Posterior cingulate gyrus (tissue), 11 donors: ENCODE measurements at regions of chr13 and their contacts with region 1.

Region 1: DNA sequence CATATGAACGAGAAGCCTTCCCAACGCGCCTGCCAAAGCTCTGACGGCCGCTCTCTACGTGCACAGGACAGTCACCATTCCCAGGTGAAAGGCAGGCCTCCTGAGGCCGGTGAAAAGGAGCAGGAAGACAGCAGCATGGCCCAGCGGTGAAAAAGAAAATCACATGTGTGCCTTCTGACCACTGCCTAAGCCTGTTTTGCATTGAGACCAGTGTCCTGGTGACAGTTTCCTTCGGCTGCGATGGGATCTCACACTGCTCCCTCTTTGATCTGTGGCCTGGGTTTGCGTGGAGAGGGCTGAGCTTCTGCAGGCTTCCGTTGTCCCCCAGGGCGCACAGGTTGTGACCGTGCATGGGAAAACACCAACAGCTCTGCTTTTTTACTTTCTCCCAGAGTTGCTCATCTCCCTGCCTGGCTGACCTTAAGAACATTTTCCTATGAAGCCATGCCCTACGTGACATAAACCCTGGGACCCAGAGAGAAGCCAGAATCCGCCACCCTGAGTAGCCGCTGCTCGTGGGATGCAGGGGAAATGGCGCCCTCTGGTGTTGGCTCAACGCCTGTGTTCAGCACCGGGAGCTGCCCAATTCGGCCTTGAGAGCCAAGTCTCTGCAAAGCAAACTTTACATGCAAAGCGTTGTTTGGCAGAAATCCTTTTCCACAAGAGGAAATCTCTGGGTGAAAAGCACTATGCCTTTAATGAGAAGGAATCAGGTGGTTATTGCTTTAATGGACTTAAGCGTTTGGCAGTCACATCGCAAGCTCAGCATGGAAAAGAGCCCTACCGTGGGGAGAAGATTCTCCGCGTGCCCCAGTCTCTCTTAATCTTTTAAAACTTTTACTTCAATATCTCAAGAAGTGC is 112.2 kb upstream of the GPR12 start:
- DNase-seq: peak; percentile 27 to 96 (median 80)

Region 2: DNA sequence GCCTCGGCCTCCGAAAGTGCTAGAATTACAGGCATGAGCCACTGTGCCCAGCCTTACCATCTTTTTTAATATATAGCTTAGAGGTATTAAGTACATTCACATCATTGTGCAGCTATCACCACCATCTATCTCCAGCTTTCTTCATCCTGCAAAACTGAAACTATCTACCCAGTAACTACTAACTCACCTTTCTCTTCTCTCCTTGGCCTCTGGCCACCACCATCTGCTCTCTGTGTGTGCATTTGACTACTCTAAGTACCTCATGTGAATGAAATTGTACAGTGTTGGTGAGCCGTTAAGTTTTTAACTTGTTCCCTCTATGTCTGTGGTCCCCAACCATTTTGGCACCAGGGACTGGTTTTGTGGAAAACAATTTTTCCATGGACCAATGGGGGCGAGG is 562.8 kb before region 1 on chr13:
- intact Hi-C with region 1: no loop called
- DNase-seq: no peak

Region 3: GRCh38 chr13:26759907-26760834 is 112.6 kb before region 1 on chr13 and contains the start of gene GPR12:
- intact Hi-C with region 1: loop called (anchors 5 kb)
- DNase-seq: peak in 7 of 10 donors; percentile 13 to 88 (median 28)